ENCODE measurements at regions of chr2 and their contacts with region 1.

Region 1: DNA sequence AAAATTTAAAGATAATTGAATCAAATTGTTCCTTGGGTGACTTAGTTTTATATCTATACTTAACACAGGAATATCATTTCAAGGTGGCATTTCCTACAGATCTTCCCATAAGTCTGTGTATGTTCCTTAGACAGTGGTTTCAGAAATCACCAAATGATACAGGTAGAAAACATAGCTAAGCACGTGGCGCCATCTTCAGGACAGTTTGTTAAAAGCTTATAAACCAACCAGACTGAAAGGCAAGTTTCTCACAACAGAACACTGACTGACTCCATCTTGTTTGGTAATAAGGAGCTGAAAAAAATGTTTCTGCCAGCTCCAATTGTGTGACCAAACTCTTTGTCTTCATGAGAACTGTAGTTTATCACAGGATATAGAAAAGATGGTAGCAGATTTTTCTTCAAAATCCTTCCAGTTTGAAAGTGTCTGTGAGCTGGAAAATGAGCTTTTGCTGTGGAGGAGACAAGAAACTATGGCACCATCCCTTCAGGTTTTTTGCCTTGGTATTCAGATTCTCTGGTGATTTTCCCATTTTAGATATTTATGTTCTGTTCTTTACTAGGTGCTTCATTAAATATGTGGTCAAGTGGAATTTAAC is 34.8 kb upstream of the NEUROD1 start:
- DNase-seq: peak; percentile 81
- ATAC-seq: peak; percentile 85
- H3K4me3 Mint-ChIP-seq: no peak overlapping the region
- H3K27ac Mint-ChIP-seq: no peak overlapping the region
- H3K4me1 Mint-ChIP-seq: no peaks in the 10 kb centered on the region
- H3K27me3 Mint-ChIP-seq: no peaks in the 10 kb centered on the region

Region 2: GRCh38 chr2:181573140-181573736 is 141.9 kb before region 1 on chr2:
- CTCF ChIA-PET with region 1: interaction called, 34 read pairs
- DNase-seq: no peak
- ATAC-seq: no peak
- H3K4me3 Mint-ChIP-seq: no peak overlapping the region
- H3K27ac Mint-ChIP-seq: no peak overlapping the region
- H3K4me1 Mint-ChIP-seq: peaks cover 1% of the 10 kb centered on the region
- H3K27me3 Mint-ChIP-seq: peaks cover 12% of the 10 kb centered on the region

Region 3: DNA sequence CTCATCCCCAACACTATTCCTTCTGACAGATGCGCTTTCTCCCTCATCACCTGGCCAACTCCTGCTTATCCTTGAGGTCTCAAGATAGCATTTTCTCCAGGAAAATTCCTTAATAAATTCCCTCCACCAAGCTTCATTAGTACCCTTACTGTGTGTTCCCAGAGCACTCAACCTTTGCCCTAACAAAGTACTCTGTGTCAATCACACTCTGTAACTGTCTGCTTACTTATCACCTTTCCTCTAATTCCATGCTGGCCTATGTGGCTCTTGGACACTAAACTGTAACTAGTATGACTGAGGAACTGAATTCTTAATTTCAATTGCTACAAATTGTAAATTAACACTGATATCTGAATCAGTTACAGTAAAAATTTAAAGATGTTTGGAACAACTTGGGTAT is 16.9 kb before region 1 on chr2:
- CTCF ChIA-PET with region 1: interaction called, 11 read pairs
- DNase-seq: no peak
- ATAC-seq: no peak
- H3K4me3 Mint-ChIP-seq: no peak overlapping the region
- H3K27ac Mint-ChIP-seq: no peak overlapping the region
- H3K4me1 Mint-ChIP-seq: no peaks in the 10 kb centered on the region
- H3K27me3 Mint-ChIP-seq: peaks cover 33% of the 10 kb centered on the region

Region 4: GRCh38 chr2:181790716-181791649 is 75.9 kb after region 1 on chr2:
- CTCF ChIA-PET with region 1: no interaction called
- DNase-seq: peak; percentile 74
- ATAC-seq: peak; percentile 93
- H3K4me3 Mint-ChIP-seq: peak overlapping the region; percentile 30
- H3K27ac Mint-ChIP-seq: peak overlapping the region; percentile 90
- H3K4me1 Mint-ChIP-seq: peaks cover 33% of the 10 kb centered on the region
- H3K27me3 Mint-ChIP-seq: no peaks in the 10 kb centered on the region